ENCODE measurements at regions of chr22 and their contacts with region 1.

Region 1: GRCh38 chr22:49132009-49132408 is 695.7 kb downstream of the BRD1 start:
- DNase-seq: no peak

Region 2: DNA sequence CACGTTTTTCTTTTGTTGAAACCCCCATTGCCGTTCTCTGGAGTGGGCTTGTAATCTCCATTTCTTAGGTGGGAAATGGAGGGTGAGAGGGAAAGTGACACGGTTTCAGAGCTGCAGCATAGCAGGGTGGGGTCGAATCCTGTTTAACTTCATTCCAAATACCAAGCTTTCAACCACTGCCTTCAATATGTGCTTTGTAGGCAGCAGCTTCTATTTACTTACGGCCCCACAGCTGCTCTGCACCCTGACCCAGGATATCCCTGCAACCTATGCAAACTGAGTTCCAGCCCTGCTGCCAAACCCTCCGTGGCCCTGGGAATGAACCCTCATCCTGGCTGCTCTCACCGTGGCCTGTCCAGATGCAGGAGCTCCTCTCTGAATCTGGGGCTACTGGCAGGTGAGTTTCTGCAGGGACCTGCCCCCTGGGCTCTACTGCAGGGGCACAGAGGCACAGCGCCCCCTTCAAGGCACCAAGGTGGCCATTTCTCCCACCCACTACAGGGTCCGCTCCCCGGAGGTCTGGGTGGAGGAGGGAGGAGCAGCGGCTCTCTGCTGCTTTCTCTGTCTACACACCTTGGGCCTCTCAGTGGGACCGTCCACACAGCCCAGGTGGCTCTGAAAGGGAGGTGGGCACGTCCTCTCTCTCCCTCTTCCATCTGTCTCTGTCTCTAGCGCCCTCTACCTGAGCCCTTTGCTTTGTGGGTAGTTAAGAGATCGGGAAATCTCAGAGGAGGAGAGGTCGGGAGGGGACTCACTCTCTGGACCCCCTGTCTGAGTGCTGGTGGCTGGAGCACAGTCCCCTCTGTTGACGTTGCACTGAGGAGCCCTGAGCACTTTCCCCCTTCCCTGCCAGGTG is 416.6 kb after region 1 on chr22:
- intact Hi-C with region 1: loop called in 1 of 2 experiments (anchors 5 kb)
- DNase-seq: peak; percentile 59

Measured in posterior vena cava (tissue), 2 donors.